CD8-positive, alpha-beta T cell (primary cell): ENCODE measurements at regions of chr19 and their contacts with region 1.

Region 1: DNA sequence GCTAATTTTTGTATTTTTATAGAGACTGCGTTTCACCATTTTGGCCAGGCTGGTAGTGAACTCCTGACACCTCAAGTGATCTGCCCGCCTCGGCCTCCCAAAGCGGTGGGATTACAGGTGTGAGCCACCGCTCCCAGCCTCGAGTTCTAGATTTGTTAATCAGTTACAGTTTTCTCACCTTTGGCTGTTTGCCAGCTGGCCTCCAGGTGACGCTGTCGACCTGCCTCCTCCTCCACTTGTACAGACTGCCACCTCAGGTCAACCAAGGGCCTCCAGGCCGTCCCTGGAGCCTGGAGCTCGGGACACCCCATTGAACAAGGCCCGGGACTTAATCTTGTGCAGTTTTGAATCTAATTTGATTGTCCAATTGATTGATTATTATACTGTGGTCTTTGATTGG is 45.5 kb downstream of the IER2 start:
- DNase-seq: peak in 8 of 9 experiments; percentile 44 to 75 (median 56)
- ATAC-seq: no peak
- H3K4me3 ChIP-seq: no peak overlapping the region
- H3K4me3 Mint-ChIP-seq: no peak overlapping the region
- H3K27ac ChIP-seq: no peak overlapping the region
- H3K27ac Mint-ChIP-seq: no peak overlapping the region
- H3K4me1 ChIP-seq: peaks cover 32% of the 10 kb centered on the region
- H3K4me1 Mint-ChIP-seq: peaks cover 21% of the 10 kb centered on the region
- H3K27me3 ChIP-seq: no peaks in the 10 kb centered on the region
- H3K27me3 Mint-ChIP-seq: no peaks in the 10 kb centered on the region
- CTCF ChIP-seq: peak; percentile 57

Region 2: DNA sequence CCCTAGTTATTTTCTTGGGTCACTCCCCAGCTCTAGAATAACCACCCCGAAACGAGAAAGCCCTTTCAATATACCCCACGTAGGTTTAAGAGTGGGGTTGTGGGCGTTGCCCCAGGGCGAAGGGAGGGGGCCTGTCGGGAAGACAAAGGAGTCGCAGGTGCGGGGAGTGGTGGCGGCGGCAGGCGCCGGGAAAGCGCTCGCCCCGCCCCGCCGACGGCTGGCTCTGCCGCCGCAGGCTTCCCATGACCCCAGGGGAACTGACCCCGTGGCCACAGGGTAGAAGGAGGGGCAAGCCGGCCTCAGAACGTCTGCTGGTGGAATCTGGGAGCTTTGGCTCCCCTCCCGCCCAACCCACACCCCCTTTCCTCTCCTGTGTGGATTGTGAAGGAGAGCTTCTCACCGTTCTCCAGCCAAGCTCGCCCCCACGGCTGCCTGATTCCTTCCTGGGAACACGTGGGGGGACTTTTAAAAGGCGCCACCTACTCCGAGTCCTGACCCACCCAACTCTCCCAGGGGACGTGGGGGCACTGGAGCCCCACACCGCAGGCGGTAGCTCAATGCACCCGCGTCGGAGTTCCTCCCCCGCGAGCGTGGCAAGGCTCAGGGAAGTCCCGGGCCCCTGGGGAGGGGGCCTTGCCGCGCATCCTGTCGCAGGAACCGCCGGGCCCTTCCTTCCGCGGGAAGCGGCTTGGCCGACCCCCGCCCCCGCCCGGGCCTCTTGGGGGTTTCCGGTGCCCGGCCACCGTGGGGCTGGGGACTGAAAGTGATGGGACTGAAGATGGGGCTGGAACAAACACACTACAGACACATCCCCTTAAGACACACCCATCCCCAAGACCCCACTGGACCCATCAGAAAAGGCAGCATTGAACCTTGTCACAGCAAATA is 40.0 kb before region 1 on chr19:
- CTCF ChIA-PET with region 1: interaction called, 118 read pairs
- POLR2A ChIA-PET with region 1: interaction called, 16 read pairs
- intact Hi-C with region 1: loop called (anchors 1 to 2 kb)
- DNase-seq: peak; percentile 43 to 93 (median 77)
- ATAC-seq: peak; percentile 11
- H3K4me3 ChIP-seq: peak overlapping the region; percentile 77 to 94
- H3K4me3 Mint-ChIP-seq: peak overlapping the region; percentile 98
- H3K27ac ChIP-seq: peak overlapping the region; percentile 96 to 99
- H3K27ac Mint-ChIP-seq: peak overlapping the region; percentile 99
- H3K4me1 ChIP-seq: peaks cover 29% of the 10 kb centered on the region
- H3K4me1 Mint-ChIP-seq: peaks cover 43% of the 10 kb centered on the region
- H3K27me3 ChIP-seq: no peaks in the 10 kb centered on the region
- H3K27me3 Mint-ChIP-seq: no peaks in the 10 kb centered on the region
- CTCF ChIP-seq: no peak

Region 3: GRCh38 chr19:13172068-13172896 is 23.4 kb before region 1 on chr19:
- CTCF ChIA-PET with region 1: interaction called, 118 read pairs
- POLR2A ChIA-PET with region 1: interaction called, 9 read pairs
- intact Hi-C with region 1: no loop called
- DNase-seq: peak; percentile 47 to 90 (median 87)
- ATAC-seq: peak; percentile 15
- H3K4me3 ChIP-seq: peak overlapping the region; percentile 42 to 51
- H3K4me3 Mint-ChIP-seq: peak overlapping the region; percentile 85
- H3K27ac ChIP-seq: peak overlapping the region; percentile 50 to 62
- H3K27ac Mint-ChIP-seq: peak overlapping the region; percentile 98
- H3K4me1 ChIP-seq: peaks cover 65% of the 10 kb centered on the region
- H3K4me1 Mint-ChIP-seq: peaks cover 55% of the 10 kb centered on the region
- H3K27me3 ChIP-seq: no peaks in the 10 kb centered on the region
- H3K27me3 Mint-ChIP-seq: no peaks in the 10 kb centered on the region
- CTCF ChIP-seq: no peak

Region 4: GRCh38 chr19:13206587-13206986 is 10.9 kb after region 1 on chr19:
- CTCF ChIA-PET with region 1: interaction called, 11 read pairs
- POLR2A ChIA-PET with region 1: no interaction called
- intact Hi-C with region 1: no loop called
- DNase-seq: no peak
- ATAC-seq: no peak
- H3K4me3 ChIP-seq: no peak overlapping the region
- H3K4me3 Mint-ChIP-seq: peak overlapping the region; percentile 65
- H3K27ac ChIP-seq: no peak overlapping the region
- H3K27ac Mint-ChIP-seq: no peak overlapping the region
- H3K4me1 ChIP-seq: peaks cover 5% of the 10 kb centered on the region
- H3K4me1 Mint-ChIP-seq: peaks cover 10% of the 10 kb centered on the region
- H3K27me3 ChIP-seq: no peaks in the 10 kb centered on the region
- H3K27me3 Mint-ChIP-seq: no peaks in the 10 kb centered on the region
- CTCF ChIP-seq: no peak

Region 5: GRCh38 chr19:13234518-13234917 is 38.8 kb after region 1 on chr19:
- CTCF ChIA-PET with region 1: interaction called, 8 read pairs
- POLR2A ChIA-PET with region 1: no interaction called
- intact Hi-C with region 1: loop called (anchors 1 kb)
- DNase-seq: peak; percentile 23 to 82 (median 63)
- ATAC-seq: peak; percentile 99
- H3K4me3 ChIP-seq: no peak overlapping the region
- H3K4me3 Mint-ChIP-seq: peak overlapping the region; percentile 65
- H3K27ac ChIP-seq: no peak overlapping the region
- H3K27ac Mint-ChIP-seq: no peak overlapping the region
- H3K4me1 ChIP-seq: peaks cover 13% of the 10 kb centered on the region
- H3K4me1 Mint-ChIP-seq: peaks cover 14% of the 10 kb centered on the region
- H3K27me3 ChIP-seq: no peaks in the 10 kb centered on the region
- H3K27me3 Mint-ChIP-seq: no peaks in the 10 kb centered on the region
- CTCF ChIP-seq: peak; percentile 91

Region 6: DNA sequence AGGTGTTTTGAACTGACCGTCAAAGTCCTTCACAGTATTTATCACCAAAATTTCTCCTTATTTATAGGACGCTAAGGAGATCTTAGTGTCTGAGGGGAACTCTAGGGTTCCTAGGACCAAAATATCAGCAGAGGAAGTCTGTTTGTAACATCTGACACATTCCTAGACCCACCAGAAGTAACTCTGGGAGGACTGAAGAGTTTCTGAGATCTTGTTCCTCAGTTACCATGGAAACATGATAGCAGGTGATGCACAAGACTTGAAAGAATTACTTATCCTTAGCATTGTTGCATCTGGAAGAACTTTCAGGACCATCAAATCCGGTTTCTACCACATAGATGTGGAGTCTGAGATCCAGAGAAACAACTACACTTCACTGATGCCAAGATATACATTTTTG is 119.1 kb after region 1 on chr19:
- CTCF ChIA-PET with region 1: no interaction called
- POLR2A ChIA-PET with region 1: no interaction called
- intact Hi-C with region 1: no loop called
- DNase-seq: no peak
- ATAC-seq: no peak
- H3K4me3 ChIP-seq: no peak overlapping the region
- H3K4me3 Mint-ChIP-seq: no peak overlapping the region
- H3K27ac ChIP-seq: no peak overlapping the region
- H3K27ac Mint-ChIP-seq: no peak overlapping the region
- H3K4me1 ChIP-seq: no peaks in the 10 kb centered on the region
- H3K4me1 Mint-ChIP-seq: no peaks in the 10 kb centered on the region
- H3K27me3 ChIP-seq: no peaks in the 10 kb centered on the region
- H3K27me3 Mint-ChIP-seq: peaks cover 41% of the 10 kb centered on the region
- CTCF ChIP-seq: no peak

Region 7: DNA sequence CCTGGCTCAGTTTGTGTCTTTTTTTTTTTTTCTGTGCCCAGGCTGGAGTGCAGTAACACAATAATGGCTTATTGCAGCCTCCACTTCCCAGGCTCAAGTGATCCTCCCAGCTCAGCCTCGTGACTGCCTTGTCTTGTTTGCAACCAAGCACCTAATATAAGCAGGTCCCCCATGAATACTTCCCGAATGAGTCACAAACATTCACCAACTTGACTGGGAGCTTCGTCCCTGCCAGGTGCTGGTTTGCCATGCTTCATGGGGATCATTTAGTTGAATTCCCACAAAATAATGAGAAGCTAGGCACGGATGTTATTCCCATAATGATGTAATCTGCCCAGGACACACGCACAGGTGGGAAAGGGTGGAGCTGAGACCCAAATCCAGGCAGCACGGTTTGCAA is 134.1 kb after region 1 on chr19:
- CTCF ChIA-PET with region 1: no interaction called
- POLR2A ChIA-PET with region 1: no interaction called
- intact Hi-C with region 1: no loop called
- DNase-seq: no peak
- ATAC-seq: no peak
- H3K4me3 ChIP-seq: no peak overlapping the region
- H3K4me3 Mint-ChIP-seq: no peak overlapping the region
- H3K27ac ChIP-seq: no peak overlapping the region
- H3K27ac Mint-ChIP-seq: no peak overlapping the region
- H3K4me1 ChIP-seq: no peaks in the 10 kb centered on the region
- H3K4me1 Mint-ChIP-seq: no peaks in the 10 kb centered on the region
- H3K27me3 ChIP-seq: no peaks in the 10 kb centered on the region
- H3K27me3 Mint-ChIP-seq: peaks cover 25% of the 10 kb centered on the region
- CTCF ChIP-seq: no peak

Region 8: DNA sequence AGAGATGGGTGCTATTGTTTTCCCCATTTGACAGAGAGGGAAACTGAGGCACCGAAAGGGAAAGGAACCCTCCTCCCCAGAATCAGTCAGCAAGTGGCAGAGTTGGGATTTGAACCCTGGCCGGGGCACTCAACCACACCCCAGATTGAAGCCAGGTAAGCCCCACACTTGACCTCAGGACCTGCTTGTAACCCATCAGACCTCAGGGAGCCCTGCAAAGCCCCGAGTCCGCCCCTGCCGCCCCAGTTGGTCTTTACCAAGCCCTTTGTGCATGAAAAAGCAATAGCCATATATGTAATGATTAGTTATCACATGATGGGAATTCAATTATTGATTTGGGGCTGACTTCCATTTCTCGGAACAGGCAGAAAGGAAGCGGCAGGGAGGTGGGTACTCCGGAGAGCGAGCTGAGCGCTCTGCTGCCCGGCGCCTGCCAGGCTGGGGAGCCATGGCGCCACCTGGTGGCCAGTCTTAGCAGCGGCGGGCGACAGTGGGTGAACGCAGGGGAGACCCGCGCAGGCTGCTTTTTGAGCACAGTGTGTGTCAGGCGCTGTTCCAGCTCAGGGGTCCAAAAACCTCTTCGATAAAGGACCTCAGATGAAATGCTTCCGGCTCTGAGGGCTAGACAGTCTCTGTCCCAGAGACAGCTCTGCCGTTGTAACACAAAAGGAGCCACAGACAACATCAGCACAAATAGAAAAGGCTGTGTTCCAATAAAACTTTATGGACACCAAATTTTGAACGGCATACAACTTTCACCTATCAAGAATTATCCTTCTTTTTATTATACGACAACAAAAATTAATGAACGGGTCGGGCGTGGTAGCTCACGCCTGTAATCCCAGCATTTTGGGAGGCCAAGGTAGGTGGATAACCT is 393.5 kb after region 1 on chr19:
- CTCF ChIA-PET with region 1: no interaction called
- POLR2A ChIA-PET with region 1: no interaction called
- intact Hi-C with region 1: loop called (anchors 2 to 10 kb)
- DNase-seq: peak; percentile 71 to 92 (median 79)
- ATAC-seq: peak; percentile 95
- H3K4me3 ChIP-seq: no peak overlapping the region
- H3K4me3 Mint-ChIP-seq: peak overlapping the region; percentile 26
- H3K27ac ChIP-seq: no peak overlapping the region
- H3K27ac Mint-ChIP-seq: no peak overlapping the region
- H3K4me1 ChIP-seq: peaks cover 9% of the 10 kb centered on the region
- H3K4me1 Mint-ChIP-seq: no peaks in the 10 kb centered on the region
- H3K27me3 ChIP-seq: peaks cover 0 to 2% of the 10 kb centered on the region in 2 experiments
- H3K27me3 Mint-ChIP-seq: peaks cover 23% of the 10 kb centered on the region
- CTCF ChIP-seq: peak; percentile 91